ENCODE measurements at regions of chr6 and their contacts with region 1.

Region 1: GRCh38 chr6:29028821-29029220 is 16.2 kb downstream of the OR2W1 start:
- DNase-seq: no peak
- H3K4me3 ChIP-seq: no peak overlapping the region
- CTCF ChIP-seq: no peak

Region 2: GRCh38 chr6:28841290-28841689 is 187.5 kb before region 1 on chr6:
- in situ Hi-C with region 1: loop called (anchors 10 kb)
- DNase-seq: no peak
- H3K4me3 ChIP-seq: no peak overlapping the region
- CTCF ChIP-seq: no peak

Region 3: DNA sequence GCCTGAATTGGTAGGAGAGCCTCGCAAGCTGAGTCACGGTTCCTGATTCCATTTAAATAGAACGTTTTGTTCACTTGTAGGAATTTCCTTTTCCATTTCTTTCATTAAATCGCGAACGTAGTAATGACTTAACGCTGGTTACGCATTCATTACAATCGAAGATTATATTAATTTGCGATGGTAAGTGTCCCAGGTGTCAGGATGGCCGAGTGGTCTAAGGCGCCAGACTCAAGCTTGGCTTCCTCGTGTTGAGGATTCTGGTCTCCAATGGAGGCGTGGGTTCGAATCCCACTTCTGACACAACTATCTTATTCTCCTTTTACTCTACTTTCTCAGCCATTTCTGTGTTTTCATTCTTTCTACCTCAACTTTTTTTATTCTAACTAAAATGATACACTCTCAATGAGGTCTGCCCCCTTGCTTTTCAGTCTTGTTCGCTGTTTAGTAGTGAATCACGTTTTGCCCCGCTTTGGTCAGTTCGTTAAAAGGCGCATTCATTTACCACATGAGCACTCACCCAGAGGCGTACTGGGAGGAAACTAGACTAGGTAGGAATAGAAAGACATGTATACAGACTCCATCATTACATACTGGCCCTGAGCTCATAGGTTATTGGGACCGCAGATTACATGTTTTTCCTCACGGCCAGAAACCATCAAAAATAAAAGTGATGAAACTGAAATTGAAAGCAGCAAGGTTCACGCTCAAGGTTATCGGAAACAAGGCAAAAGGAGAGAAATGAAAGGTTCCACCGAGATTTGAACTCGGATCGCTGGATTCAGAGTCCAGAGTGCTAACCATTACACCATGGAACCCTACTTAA is 87.8 kb before region 1 on chr6:
- in situ Hi-C with region 1: no loop called
- DNase-seq: peak; percentile 64
- H3K4me3 ChIP-seq: peak overlapping the region; percentile 67
- CTCF ChIP-seq: no peak

Measured in astrocyte of the cerebellum (primary cell).